Posterior cingulate gyrus (tissue), 11 donors: ENCODE measurements at regions of chr15 and their contacts with region 1.

Region 1: GRCh38 chr15:68820295-68821189 is at the start of gene ANP32A:
- DNase-seq: peak; percentile 92 to 99 (median 96)

Region 2: DNA sequence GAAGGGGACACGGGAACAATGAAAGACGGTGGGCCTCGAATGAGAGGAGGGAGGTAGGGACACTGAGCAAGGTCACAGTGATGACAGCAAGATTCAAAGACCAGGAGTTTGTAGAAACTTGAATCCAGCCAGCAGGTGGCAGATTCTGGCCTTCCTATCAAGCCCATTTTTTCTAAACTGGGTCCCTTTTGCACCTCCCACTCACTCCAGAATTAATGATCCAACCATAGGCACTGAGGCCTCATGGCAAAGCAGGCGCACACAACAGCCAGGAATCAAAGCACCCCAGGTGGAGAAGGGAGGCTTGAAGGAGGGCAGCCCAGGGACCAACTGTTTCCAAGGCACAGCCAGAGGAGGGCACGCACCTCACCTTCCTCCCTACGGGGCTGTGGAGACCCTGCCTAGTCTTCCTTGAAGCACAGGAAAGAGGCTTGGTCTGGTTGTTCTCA is 90.0 kb before region 1 on chr15:
- intact Hi-C with region 1: loop called (anchors 5 kb)
- DNase-seq: peak in 8 of 10 donors; percentile 29 to 85 (median 62)

Region 3: DNA sequence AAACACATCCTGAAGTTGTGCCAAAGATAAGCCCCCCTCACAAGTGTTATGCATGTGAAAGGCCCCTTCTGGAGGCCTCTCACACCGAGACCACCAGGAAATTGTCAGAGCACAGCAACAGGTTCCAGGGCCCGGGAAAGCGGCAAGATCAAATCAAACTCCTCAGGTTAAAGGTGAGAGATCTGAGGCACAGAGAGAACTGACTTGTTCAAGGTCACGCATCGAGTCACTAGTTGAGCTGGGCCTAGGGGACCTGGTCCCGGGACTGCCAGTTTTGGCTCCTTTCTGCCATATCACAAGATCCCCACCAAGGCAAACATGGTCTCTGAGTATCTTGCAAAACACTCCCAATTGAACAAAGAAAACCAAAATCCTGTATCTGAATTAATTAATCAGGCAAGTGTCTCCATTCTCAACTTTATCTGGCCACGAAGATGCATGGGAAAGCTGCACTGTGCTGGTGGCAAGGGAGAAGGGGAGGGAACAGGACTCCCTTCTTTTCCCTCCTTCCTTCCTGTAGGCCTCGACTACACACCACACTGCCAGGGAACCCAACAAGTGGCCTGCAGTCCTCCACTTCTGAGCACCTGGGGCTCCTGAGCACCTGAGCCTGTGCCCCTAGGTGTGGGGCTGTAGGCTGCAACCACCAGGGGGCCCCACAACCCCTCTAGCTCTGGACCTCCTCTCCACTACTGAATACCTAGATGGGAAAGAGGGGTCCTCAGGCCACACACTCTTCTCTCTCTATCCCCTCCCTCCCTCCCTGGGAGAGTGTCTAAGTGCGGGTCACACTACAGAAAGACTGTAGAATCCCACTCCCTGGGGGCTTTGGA is 37.1 kb before region 1 on chr15:
- intact Hi-C with region 1: loop called (anchors 5 kb)
- DNase-seq: peak in 1 of 10 donors; percentile 49

Region 4: DNA sequence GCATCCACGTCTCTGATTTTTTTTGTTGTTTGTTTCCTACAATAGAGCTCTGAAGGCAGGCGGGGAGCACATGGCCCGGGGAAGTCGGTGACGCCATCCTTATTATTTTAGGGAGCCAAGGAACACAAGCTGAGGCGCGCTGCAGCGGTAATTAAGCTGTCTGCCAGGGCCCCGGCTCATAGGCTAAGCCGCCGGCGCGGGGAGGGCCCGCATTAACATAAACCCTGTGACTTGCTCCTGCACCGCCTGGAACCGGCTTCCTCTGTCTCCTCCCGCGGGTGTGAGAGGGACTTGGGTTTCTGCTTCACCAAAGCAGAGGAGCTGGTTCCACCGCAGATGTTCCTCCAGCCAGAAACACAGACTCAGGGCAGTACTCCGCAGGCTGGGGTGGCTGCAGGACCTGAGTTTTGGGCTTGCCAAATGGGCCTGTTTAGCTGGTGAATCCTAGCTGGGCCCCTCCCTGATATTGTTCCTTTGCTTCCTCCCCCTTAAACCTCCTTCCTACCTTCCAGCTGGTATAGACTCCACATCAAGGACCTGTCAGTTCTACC is 25.2 kb before region 1 on chr15:
- intact Hi-C with region 1: loop called (anchors 2 kb)
- DNase-seq: peak; percentile 84 to 99 (median 92)